IMR-90 (cell line): ENCODE measurements at regions of chr2 and their contacts with region 1.

Region 1: GRCh38 chr2:128321784-128322714 is 3.4 kb upstream of the HS6ST1 start:
- DNase-seq: peak; percentile 75
- ATAC-seq: peak; percentile 64
- H3K4me3 ChIP-seq: peak overlapping the region; percentile 49
- H3K27ac ChIP-seq: peak overlapping the region; percentile 58
- H3K4me1 ChIP-seq: peaks cover 7% of the 10 kb centered on the region; the same call in 1 of the 2 replicates
- H3K27me3 ChIP-seq: no peaks in the 10 kb centered on the region
- CTCF ChIP-seq: peak; percentile 99
- POLR2A ChIP-seq: peak; percentile 63
- RAD21 ChIP-seq: peak; percentile 95

Region 2: GRCh38 chr2:128069769-128070168 is 252.3 kb before region 1 on chr2:
- CTCF ChIA-PET with region 1: no interaction called
- POLR2A ChIA-PET with region 1: no interaction called
- dilution Hi-C with region 1: no loop called
- in situ Hi-C with region 1: no loop called
- intact Hi-C with region 1: loop called (anchors 10 kb)
- DNase-seq: peak; percentile 59
- ATAC-seq: peak; percentile 42
- H3K4me3 ChIP-seq: no peak overlapping the region
- H3K27ac ChIP-seq: no peak overlapping the region
- H3K4me1 ChIP-seq: no peaks in the 10 kb centered on the region
- H3K27me3 ChIP-seq: 0 out of 2 replicates have a peak, but pooled peaks cover 2% of the 10 kb centered on the region
- CTCF ChIP-seq: no peak
- POLR2A ChIP-seq: no peak
- RAD21 ChIP-seq: no peak

Region 3: DNA sequence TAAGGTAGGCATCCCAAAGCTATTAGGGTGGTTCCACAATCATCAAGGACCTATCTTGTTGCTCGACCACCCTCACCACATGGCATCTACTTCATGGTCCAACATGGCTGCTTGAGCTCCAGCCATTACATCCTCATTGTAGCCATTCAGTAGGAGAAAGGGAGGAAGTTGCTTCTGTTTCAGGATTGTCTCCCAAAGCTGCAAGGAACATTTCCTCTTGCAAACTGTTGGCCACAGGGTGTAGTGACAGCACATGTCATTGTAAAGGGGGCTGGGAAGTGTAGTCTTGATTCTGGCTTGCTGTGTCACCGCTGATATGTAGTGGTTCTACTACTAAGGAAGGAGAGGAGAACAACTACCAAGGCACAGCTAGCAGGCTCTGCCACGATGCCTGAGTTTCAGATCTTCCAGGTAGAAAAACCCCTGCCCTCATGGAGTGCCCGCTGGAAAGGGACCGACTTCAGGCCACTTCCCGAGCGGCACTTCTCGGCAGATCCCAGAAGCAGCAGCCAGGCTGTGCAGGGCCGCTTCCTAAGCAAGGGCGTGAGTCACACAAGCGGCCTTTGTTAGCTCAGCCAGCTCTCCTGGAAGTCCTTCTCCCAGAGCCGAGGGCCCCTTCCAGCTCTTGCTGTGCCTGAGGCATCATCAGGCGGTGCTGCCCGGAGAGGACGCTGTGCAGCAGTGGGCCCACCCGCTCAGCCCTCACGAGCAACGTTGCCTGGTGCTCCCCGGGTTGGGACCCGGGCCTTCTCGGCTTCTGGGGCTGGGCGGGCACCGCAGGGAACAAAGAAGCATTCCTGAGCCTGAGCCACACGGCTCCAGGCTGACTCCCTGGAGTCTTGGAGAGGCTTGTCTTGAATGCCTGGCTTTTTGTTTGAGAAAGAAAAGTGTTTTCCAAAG is 61.6 kb before region 1 on chr2:
- CTCF ChIA-PET with region 1: no interaction called
- POLR2A ChIA-PET with region 1: no interaction called
- dilution Hi-C with region 1: no loop called
- in situ Hi-C with region 1: no loop called
- intact Hi-C with region 1: no loop called
- DNase-seq: peak; percentile 81
- ATAC-seq: peak; percentile 66
- H3K4me3 ChIP-seq: no peak overlapping the region
- H3K27ac ChIP-seq: peak overlapping the region; percentile 34
- H3K4me1 ChIP-seq: peaks cover 5% of the 10 kb centered on the region; the same call in 1 of the 2 replicates
- H3K27me3 ChIP-seq: no peaks in the 10 kb centered on the region
- CTCF ChIP-seq: no peak
- POLR2A ChIP-seq: no peak
- RAD21 ChIP-seq: no peak

Region 4: DNA sequence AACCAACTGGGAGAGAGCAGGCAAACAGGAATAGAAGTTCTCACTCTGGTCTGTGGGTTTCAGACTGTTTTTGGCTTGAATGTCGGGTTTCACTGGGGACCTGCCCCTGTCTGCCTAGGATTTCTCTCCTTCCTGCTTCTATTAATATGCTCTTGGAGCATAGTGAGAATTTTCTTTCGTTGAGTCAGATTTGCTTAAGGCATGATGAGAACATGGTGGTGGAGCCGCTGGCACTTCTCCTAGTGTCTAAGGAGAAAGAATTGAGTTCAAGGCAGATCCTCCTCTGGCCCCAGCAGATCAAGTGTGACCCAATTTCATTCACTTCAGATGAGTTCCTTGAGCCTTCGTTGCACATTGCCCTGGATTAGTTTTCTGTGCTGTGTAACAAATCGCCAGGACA is 100.5 kb after region 1 on chr2:
- CTCF ChIA-PET with region 1: no interaction called
- POLR2A ChIA-PET with region 1: no interaction called
- dilution Hi-C with region 1: no loop called
- in situ Hi-C with region 1: no loop called
- intact Hi-C with region 1: no loop called
- DNase-seq: peak; percentile 88
- ATAC-seq: peak; percentile 69
- H3K4me3 ChIP-seq: no peak overlapping the region
- H3K27ac ChIP-seq: no peak overlapping the region
- H3K4me1 ChIP-seq: peaks cover 10% of the 10 kb centered on the region
- H3K27me3 ChIP-seq: no peaks in the 10 kb centered on the region
- CTCF ChIP-seq: no peak
- POLR2A ChIP-seq: no peak
- RAD21 ChIP-seq: no peak

Region 5: DNA sequence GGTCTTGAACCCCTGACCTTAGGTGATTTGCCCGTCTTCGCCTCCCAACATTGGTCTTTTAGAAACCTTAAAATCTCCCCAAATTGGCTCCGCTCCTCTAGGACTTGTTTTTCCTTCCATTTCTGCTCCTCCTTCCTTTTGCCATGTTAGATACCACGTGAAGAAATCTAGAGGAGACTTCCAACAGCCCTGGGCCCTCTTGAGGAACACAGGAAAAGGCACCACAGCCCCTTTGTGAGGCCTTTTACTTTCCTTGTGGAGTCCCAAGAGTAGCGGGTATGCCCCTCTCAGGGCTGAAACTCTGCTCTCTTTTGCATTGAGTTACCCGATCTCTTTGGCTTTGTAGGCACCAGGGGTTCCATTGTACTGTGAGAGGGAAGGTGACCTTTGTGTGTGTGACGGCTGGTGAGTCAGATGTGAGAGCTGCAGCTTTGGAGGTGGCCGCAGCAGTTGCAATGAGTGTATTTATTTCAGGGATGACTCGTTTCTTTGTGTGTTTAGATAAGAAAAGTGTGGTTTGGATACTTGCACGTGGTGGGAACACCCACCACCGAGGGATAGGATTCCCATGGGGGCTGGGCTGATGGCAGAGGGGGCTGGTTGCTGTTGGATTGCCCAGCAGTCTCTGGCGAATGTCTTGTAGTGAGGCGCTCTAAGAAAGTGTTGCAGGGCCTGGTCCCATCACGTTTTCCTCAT is 215.0 kb after region 1 on chr2:
- CTCF ChIA-PET with region 1: no interaction called
- POLR2A ChIA-PET with region 1: no interaction called
- dilution Hi-C with region 1: no loop called
- in situ Hi-C with region 1: loop called (anchors 10 kb)
- intact Hi-C with region 1: loop called (anchors 1 kb)
- DNase-seq: peak; percentile 99
- ATAC-seq: peak; percentile 91
- H3K4me3 ChIP-seq: no peak overlapping the region
- H3K27ac ChIP-seq: peak overlapping the region; percentile 79
- H3K4me1 ChIP-seq: peaks cover 8% of the 10 kb centered on the region
- H3K27me3 ChIP-seq: no peaks in the 10 kb centered on the region
- CTCF ChIP-seq: peak; percentile 17; the same call in 1 of the 2 replicates
- POLR2A ChIP-seq: peak; percentile 72; the same call in 1 of the 2 replicates
- RAD21 ChIP-seq: peak; percentile 37

Region 6: DNA sequence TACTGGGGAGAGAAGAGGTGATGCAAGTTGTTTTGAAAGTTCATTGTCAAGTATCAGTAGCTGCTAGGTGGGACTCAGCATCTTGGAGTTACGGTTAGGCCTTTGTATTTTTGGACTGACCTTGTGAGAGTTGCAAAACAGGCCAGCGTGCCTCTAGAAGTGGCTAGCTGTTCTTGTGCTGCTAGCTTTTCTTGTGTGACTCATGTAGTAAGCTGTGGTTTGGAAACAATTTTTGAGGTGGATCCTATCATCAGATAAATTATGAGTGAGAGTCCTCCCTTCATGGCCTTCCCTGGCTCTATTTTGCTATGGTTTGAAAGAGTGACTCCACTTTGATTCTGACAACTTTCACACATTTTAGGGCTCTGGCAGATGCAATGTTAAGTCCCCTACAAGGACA is 405.9 kb after region 1 on chr2:
- CTCF ChIA-PET with region 1: no interaction called
- POLR2A ChIA-PET with region 1: no interaction called
- dilution Hi-C with region 1: no loop called
- in situ Hi-C with region 1: loop called (anchors 10 kb)
- intact Hi-C with region 1: no loop called
- DNase-seq: peak; percentile 89
- ATAC-seq: peak; percentile 95
- H3K4me3 ChIP-seq: no peak overlapping the region
- H3K27ac ChIP-seq: peak overlapping the region; percentile 49; the same call in 1 of the 2 replicates
- H3K4me1 ChIP-seq: peaks cover 6% of the 10 kb centered on the region
- H3K27me3 ChIP-seq: peaks cover 2% of the 10 kb centered on the region; the same call in 1 of the 2 replicates
- CTCF ChIP-seq: no peak
- POLR2A ChIP-seq: no peak
- RAD21 ChIP-seq: no peak

Region 7: GRCh38 chr2:129396980-129397599 is 1075.0 kb after region 1 on chr2:
- CTCF ChIA-PET with region 1: no interaction called
- POLR2A ChIA-PET with region 1: no interaction called
- dilution Hi-C with region 1: no loop called
- in situ Hi-C with region 1: no loop called
- intact Hi-C with region 1: loop called (anchors 5 kb)
- DNase-seq: no peak
- ATAC-seq: no peak
- H3K4me3 ChIP-seq: no peak overlapping the region
- H3K27ac ChIP-seq: no peak overlapping the region
- H3K4me1 ChIP-seq: no peaks in the 10 kb centered on the region
- H3K27me3 ChIP-seq: no peaks in the 10 kb centered on the region
- CTCF ChIP-seq: peak; percentile 32
- POLR2A ChIP-seq: no peak
- RAD21 ChIP-seq: peak; percentile 40